GM10248 (cell line): ENCODE measurements at regions of chr1 and their contacts with region 1.

Region 1: GRCh38 chr1:181142096-181142958 is 53.8 kb downstream of the IER5 start:
- DNase-seq: peak; percentile 81
- CTCF ChIP-seq: peak; percentile 98

Region 2: GRCh38 chr1:180814859-180815587 is 327.3 kb before region 1 on chr1:
- CTCF ChIA-PET with region 1: no interaction called
- POLR2A ChIA-PET with region 1: no interaction called
- DNase-seq: no peak
- CTCF ChIP-seq: no peak

Region 3: GRCh38 chr1:180954005-180954800 is 188.1 kb before region 1 on chr1:
- CTCF ChIA-PET with region 1: interaction called, 11 read pairs
- POLR2A ChIA-PET with region 1: no interaction called
- DNase-seq: peak; percentile 83
- CTCF ChIP-seq: no peak

Region 4: GRCh38 chr1:181033799-181034451 is 108.4 kb before region 1 on chr1 and contains the start of gene MR1:
- CTCF ChIA-PET with region 1: interaction called, 300 read pairs
- POLR2A ChIA-PET with region 1: no interaction called
- DNase-seq: peak; percentile 86
- CTCF ChIP-seq: no peak

Region 5: GRCh38 chr1:181077576-181078242 is 64.6 kb before region 1 on chr1:
- CTCF ChIA-PET with region 1: interaction called, 25 read pairs
- POLR2A ChIA-PET with region 1: no interaction called
- DNase-seq: no peak
- CTCF ChIP-seq: no peak

Region 6: GRCh38 chr1:181105134-181106021 is 36.9 kb before region 1 on chr1:
- CTCF ChIA-PET with region 1: interaction called, 107 read pairs
- POLR2A ChIA-PET with region 1: interaction called, 3 read pairs
- DNase-seq: peak; percentile 94
- CTCF ChIP-seq: no peak

Region 7: DNA sequence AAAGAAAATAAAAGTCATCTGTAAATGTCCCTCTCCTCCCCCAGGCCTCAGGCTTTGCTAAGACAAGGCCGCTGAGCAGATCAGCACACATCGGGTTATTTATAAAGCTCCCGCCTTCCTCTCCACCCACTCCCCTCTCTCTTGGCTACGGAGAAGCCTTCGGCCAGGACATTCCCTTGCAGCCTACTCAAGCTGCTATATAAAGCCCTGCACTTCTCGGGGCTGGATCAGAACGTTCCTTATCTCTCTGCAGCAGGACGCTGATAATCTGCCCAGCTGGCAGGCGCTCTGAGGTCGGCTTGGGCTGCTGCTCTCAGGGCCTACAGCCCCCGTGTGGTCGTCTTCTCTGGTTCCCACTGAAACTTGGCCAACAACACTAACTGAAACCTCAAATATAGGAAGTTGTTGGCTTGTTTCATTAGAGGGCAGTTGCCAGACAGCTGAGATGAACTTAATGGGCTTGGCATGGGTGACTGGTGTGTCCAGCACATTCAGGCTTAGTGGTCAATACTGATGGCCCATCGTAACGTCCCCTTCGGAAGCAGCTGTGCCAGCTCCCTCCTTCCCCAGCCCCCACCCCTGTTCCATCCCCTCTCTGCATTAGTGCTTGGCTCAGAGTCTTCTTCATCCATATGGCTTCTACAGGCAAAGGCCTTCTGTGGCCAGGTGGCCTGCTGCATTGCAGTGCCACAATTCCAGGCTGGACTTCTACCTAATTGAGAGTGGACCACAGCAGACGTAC is 10.7 kb after region 1 on chr1:
- CTCF ChIA-PET with region 1: interaction called, 90 read pairs
- POLR2A ChIA-PET with region 1: no interaction called
- DNase-seq: peak; percentile 70
- CTCF ChIP-seq: peak; percentile 28

Region 8: GRCh38 chr1:181390410-181391077 is 248.2 kb after region 1 on chr1:
- CTCF ChIA-PET with region 1: no interaction called
- POLR2A ChIA-PET with region 1: no interaction called
- DNase-seq: no peak
- CTCF ChIP-seq: no peak

Region 9: GRCh38 chr1:181659321-181659957 is 517.1 kb after region 1 on chr1:
- CTCF ChIA-PET with region 1: no interaction called
- POLR2A ChIA-PET with region 1: no interaction called
- DNase-seq: no peak
- CTCF ChIP-seq: no peak